Sigmoid colon (tissue), 7 donors: ENCODE measurements at regions of chr7 and their contacts with region 1.

Region 1: DNA sequence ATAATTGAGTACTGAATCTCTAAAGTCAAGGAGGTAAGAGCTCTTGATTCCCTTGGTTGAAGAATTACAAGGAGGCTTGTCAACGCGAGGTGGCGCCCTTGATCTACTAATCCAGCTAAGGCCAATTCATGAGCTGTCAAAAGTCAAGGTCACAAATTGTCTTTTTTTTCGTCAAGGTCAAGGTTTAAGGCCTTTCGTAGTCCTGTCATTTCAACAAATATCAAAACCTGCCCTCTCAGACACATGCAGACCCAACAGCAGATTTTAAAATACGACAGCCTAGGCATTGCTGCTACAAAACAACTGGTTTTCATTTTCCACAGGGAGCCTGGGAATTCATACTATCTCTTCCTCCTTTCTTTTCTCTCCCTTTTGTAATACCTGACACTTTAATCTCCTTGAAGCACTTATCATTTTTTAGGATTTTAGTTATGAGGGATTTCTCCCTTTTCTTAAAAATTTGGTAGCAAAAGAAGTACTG is 3.6 kb downstream of the HOXA13 start:
- DNase-seq: peak; percentile 94
- H3K4me3 ChIP-seq: peak overlapping the region; percentile 63 to 78 (median 70)
- H3K27ac ChIP-seq: peak overlapping the region in 3 of 4 donors; percentile 97 to 98 (median 98)
- H3K4me1 ChIP-seq: peaks cover 0 to 60% (median 35%) of the 10 kb centered on the region in 4 donors
- H3K27me3 ChIP-seq: peaks cover 0 to 36% (median 0%) of the 10 kb centered on the region in 3 donors
- CTCF ChIP-seq: peak in 3 of 4 experiments; percentile 58 to 81 (median 76)
- EP300 ChIP-seq: no peak
- POLR2A ChIP-seq: no peak

Region 2: GRCh38 chr7:27662490-27663205 is 466.3 kb after region 1 on chr7 and contains the start of gene HIBADH:
- intact Hi-C with region 1: loop called (anchors 5 kb)
- DNase-seq: peak; percentile 100
- H3K4me3 ChIP-seq: peak within 1 kb of the TSS; percentile 72 to 97 (median 90)
- H3K27ac ChIP-seq: peak within 1 kb of the TSS; percentile 91 to 99 (median 93)
- H3K4me1 ChIP-seq: peaks cover 0 to 16% (median 13%) of the 10 kb centered on the region in 4 donors
- H3K27me3 ChIP-seq: no peaks in the 10 kb centered on the region
- CTCF ChIP-seq: peak in 1 of 4 experiments; percentile 17
- EP300 ChIP-seq: peak in 3 of 4 donors; percentile 59 to 88 (median 74)
- POLR2A ChIP-seq: peak; percentile 69 to 84
- total RNA-seq, gene HIBADH: 63.5 to 89.5 (median 80.0) TPM

Region 3: GRCh38 chr7:27784393-27785053 is 588.2 kb after region 1 on chr7:
- intact Hi-C with region 1: loop called (anchors 5 kb)
- DNase-seq: no peak
- H3K4me3 ChIP-seq: no peak overlapping the region
- H3K27ac ChIP-seq: no peak overlapping the region
- H3K4me1 ChIP-seq: peaks cover 0 to 9% (median 8%) of the 10 kb centered on the region in 4 donors
- H3K27me3 ChIP-seq: no peaks in the 10 kb centered on the region
- CTCF ChIP-seq: peak in 3 of 4 experiments; percentile 36 to 46 (median 42)
- EP300 ChIP-seq: no peak
- POLR2A ChIP-seq: no peak

Region 4: DNA sequence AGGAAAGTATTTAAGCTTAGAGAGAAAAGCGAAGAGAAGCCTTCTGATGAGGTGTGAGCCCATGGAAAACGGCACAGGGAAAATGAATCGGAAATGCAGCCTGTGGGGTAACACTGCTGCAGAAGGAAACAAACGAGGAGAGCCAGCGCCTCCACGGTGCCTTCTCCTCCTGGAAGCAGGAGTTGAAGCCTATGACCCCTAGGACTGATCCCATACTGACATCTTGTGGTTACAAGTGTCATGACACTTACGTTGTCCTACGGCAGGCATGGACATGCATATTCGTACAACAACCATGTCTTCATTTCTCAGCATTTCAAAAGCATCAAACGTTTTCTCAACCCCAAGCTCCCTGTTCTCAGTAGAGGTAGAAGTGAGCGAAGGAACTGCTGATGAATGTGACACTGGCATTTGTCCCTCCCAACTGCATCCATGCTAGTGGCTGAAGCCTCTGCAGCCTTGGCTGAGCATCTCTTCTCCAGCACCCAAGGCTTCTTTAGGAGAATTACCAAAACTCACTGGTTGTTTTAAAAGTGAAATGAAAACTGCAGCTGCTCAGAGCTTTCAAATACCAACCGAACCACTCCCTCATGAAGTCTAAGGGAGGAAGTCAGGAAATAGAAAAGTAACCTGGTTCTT is 824.1 kb after region 1 on chr7:
- intact Hi-C with region 1: loop called (anchors 2 kb)
- DNase-seq: peak; percentile 88
- H3K4me3 ChIP-seq: no peak overlapping the region
- H3K27ac ChIP-seq: peak overlapping the region in 2 of 4 donors; percentile 75 to 76
- H3K4me1 ChIP-seq: peaks cover 0 to 70% (median 56%) of the 10 kb centered on the region in 4 donors
- H3K27me3 ChIP-seq: no peaks in the 10 kb centered on the region
- CTCF ChIP-seq: peak; percentile 79 to 84 (median 83)
- EP300 ChIP-seq: no peak
- POLR2A ChIP-seq: no peak

Region 5: DNA sequence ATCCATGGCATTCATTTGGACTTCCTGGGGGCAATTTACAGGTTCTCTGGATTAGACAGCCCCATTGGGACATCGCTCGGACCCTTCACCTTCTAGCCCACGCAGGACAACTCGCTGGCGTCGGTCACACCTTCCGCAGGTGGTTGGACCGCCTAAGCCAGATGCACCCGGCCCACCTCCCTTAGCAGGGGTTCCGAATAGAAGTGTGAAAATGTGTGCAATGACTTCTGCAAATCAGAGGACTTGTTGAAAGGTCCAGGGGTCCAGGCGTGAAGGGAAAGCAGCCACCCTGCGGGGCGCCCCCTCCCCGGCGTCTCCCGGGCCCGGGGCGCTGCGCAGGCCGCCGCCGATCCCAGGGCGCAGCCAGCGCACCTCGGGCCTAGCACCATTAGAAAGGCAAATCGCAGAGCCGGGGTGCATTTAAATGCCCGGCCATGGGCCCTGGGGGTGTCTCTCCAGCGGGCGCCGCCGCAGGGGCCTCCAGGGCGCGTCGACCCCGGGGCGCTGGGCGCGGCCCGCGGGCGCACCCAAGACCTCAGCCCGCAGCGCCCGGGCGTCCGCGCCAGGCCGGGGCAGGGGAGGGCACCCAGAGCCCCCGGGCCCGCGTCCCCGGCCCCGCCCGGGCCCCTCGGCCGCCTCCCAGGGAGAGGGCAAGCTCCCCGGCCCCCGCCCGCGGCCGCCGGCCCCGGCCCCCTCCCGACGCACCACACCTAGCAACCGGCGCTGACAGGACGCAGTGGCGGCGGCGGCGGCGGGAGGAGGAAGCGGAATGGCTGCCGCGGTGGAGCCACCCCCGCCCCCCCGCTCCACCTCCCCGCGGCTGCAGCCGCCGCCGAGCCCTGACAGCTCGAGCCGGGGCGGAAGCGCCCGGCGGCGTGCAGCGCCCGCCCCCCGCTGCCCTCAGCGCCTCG is 983.0 kb after region 1 on chr7:
- intact Hi-C with region 1: loop called (anchors 10 kb)
- DNase-seq: peak; percentile 84
- H3K4me3 ChIP-seq: peak overlapping the region; percentile 56 to 94 (median 88)
- H3K27ac ChIP-seq: peak overlapping the region; percentile 87 to 95 (median 94)
- H3K4me1 ChIP-seq: peaks cover 0 to 64% (median 55%) of the 10 kb centered on the region in 4 donors
- H3K27me3 ChIP-seq: no peaks in the 10 kb centered on the region
- CTCF ChIP-seq: no peak
- EP300 ChIP-seq: no peak
- POLR2A ChIP-seq: no peak